ENCODE measurements at regions of chr12 and their contacts with region 1.

Region 1: DNA sequence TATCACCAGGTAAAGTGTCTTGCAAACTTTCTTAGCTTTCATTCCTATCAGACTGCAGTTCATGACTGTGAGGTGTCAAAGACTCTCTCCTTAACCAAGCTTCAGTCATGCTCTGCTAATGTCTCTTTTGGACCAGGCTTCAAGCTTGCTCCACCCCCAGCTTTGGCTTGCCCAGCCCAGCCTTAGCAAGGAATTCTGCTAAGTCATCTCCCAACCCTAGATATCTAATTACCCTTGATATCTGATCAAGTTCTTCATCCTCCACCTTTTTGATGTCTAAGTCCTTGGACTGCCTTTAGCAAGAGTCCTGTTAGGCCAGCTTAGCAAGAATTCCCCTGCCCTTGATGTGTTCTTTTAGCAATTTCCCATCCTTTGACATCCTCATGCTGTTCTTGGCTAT is 108.9 kb upstream of the FGD4 start:
- DNase-seq: no peak
- CTCF ChIP-seq: no peak

Region 2: GRCh38 chr12:32274665-32275064 is 15.7 kb before region 1 on chr12:
- CTCF ChIA-PET with region 1: interaction called, 24 read pairs
- POLR2A ChIA-PET with region 1: no interaction called
- DNase-seq: no peak
- CTCF ChIP-seq: no peak

Region 3: DNA sequence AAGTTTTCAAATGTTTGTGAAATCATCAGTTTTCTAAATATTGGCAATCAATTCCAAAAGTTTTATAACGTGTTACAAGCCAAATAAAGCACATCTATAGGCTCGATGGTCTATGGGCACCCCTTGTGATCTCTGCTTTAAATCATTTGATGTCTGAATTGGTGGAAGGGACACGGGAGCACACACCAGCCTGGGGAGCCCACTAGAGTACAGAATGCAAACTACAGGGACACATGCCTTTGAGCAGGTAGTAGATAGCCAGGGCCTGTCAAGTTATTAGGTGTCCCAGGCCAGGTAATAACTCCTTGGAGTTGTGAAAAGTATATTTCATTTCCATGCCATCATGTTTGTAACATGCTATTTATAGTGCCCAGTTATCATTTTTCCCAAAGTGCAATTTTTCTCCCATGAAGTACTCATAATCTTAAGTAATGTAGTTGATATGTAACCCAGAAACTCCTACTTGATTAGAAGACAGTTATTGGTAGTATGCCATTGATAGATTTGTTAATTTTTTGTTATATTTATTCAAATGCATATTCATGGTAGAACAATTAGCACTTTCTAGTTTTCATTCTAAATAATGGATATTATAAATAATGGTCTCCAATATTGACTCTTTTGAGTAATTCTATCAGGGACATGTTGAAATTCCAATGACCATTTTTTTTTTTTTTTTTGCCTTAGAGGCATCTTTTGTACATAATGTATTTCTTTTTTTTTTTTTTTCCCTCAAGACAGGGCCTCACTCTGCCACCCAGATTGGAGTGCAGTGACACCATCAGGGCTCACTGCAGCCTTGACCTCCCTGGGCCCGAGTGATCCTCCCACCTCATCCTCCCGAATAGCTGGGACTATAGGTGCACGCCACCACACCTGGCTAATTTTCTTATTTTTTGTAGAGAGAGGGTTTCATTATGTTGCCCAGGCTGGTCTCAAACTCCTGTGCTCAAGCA is 12.1 kb after region 1 on chr12:
- CTCF ChIA-PET with region 1: interaction called, 13 read pairs
- POLR2A ChIA-PET with region 1: no interaction called
- DNase-seq: peak; percentile 74
- CTCF ChIP-seq: peak; percentile 80

Region 4: DNA sequence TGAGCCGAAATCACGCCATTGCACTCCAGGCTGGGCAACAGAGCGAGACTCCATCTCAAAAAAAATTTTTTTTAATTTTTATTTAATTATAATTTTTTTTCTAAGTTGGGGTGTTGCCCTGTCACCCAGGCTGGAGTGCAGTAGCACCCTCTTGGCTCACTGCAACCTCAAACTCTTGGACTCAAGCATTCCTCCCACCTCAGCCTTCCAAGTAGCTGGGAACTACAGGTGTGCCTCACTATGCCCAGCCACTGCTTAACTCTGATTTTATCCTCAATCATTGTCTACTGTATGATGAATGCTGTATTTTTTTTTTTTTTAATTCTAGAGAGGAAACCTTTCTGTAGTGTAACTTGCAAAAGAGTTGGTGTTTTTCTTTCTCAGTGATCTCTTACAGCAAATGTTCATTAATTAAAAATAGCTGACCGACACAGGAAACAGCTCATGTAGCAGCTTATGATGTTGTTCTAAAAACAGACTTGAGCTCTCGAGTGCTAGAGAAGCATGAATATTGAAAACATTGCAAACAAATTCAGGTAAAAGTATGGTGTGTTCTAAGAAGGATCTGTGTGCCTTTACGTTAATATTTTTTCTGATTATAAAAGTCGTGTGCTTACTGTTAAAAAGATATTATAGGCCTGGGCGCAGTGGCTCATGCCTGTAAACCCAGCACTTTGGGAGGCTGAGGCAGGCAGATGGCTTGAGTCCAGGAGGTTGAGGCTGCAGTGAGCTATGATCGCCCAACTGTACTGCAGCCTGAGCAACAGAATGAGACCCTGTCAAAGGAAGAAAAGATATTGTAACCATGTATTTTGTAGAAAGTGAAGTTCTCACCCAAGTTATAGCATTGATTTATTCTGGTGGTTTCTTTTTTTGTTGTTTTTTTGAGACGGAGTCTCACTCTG is 177.8 kb after region 1 on chr12:
- CTCF ChIA-PET with region 1: no interaction called
- POLR2A ChIA-PET with region 1: no interaction called
- DNase-seq: no peak
- CTCF ChIP-seq: no peak

Measured in GM10248 (cell line).